ENCODE measurements at regions of chr4 and their contacts with region 1.

Region 1: GRCh38 chr4:124060261-124060918 is 652.1 kb downstream of the ANKRD50 start:
- DNase-seq: no peak
- ATAC-seq: peak; percentile 93

Region 2: DNA sequence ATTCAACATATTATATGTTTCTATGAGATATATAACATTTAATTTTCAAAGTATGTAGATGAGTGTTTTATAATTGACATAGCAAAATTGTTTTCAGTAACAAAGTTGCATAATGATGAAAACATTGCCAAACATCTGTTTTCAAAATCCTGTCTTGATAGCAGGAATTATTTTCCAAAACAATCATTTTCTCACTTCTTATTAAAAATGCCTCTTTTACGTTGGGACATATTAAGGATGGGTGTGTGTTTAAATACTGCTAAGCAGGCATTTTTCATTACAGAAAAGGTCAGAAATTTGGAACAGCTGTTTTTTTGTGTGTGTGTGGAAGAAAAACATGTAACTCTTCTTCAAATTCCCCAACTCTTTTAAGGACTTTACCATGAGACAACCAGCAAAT is 211.8 kb before region 1 on chr4:
- intact Hi-C with region 1: no loop called
- DNase-seq: no peak
- ATAC-seq: peak; percentile 63

Region 3: DNA sequence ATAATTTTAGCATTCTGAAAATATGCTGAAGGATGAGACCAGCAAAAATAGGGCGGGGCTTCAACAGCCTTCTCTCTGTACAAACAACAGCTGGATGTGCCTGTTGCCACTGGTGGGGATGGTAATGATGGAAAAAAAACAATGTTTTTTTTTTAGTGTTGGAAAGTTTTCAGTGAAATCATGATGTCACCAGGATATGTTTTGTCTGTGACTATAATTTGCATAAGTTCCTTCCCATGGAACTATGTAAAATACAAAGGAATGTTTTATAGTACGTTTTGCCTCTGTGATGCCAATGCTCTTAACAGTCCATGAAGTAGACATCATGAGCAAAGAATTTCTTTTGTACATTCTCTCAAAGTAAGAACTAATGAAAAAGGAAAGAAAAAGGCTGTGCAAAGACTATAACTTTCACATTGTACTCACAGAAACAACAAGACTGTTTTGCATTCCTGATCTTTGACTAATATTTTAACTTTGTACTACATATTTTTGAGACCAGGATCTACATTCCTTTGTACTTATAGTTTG is 74.1 kb before region 1 on chr4:
- intact Hi-C with region 1: no loop called
- DNase-seq: no peak
- ATAC-seq: peak; percentile 88

Region 4: GRCh38 chr4:124135409-124135813 is 75.0 kb after region 1 on chr4:
- intact Hi-C with region 1: loop called (anchors 2 kb)
- DNase-seq: no peak
- ATAC-seq: peak; percentile 51

Region 5: DNA sequence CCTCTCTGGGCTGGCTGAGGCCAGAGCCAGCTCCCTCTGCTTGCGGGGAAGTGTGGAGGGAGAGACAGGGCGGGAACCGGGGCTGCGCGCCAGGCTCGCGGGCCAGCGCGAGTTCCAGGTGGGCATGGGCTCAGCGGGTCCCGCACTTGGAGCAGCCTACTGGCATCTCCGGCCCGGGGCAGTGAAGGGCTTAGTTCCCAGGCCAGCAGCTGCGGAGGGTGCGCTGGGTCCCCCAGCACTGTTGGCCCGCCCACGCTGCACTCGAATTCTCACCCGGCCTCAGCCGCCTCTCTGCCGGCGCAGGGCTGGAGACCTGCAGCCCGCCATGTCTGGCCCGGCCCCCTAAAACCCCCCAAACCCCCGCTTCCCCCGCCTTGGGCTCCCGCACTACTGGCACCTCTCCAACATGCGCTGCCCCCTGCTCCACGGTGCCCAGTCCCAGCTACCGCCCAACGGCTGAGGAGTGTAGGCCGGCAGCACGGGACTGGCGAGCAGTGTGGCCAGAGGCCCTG is 1220.6 kb after region 1 on chr4:
- intact Hi-C with region 1: no loop called
- DNase-seq: no peak
- ATAC-seq: no peak

Measured in sciatic nerve (tissue), 2 donors.